Mammary epithelial cell (primary cell): ENCODE measurements at regions of chr2 and their contacts with region 1.

Region 1: DNA sequence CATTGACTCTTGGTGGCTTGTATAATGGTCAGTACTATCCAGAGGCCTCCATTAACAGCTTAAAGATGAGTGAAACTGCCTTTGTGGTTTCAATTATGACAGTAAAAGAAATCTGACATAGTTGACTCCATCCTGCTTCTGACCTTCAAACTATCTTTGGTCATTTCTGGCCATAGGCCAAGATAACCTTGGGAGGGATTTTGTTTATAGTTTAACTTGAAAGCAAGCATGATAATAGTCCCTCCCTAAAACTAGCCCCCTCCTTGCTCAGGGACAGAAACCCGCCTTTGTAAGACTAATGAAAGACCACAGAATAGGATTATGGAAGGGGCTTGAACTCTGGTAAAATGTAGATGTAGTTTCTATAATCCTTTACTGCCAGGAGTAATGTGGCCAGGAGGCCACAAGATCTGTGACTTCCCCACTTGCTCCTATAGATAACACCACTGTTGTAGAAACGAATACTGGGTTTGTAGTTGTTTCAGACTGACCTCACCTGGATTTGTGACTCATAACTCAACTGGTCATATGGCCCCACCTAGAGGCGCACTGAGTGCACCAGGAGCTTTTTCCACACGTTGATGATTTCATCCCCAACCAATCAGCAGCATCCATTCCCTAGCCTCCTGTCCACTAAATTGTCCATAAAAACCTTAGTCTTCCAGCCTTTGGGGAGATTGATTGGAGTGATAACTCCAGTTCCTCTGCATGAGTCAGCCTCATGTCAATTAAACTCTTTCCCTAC is 8.6 kb upstream of the PLEKHM3 start:
- DNase-seq: peak; percentile 90
- H3K4me3 ChIP-seq: no peak overlapping the region
- H3K27ac ChIP-seq: peak overlapping the region; percentile 4
- H3K4me1 ChIP-seq: no peaks in the 10 kb centered on the region
- H3K27me3 ChIP-seq: no peaks in the 10 kb centered on the region
- CTCF ChIP-seq: peak; percentile 68 to 76

Region 2: GRCh38 chr2:206800506-206801417 is 1233.2 kb before region 1 on chr2:
- CTCF ChIA-PET with region 1: no interaction called
- dilution Hi-C with region 1: no loop called
- in situ Hi-C with region 1: no loop called
- intact Hi-C with region 1: loop called (anchors 1 kb)
- DNase-seq: peak; percentile 69
- H3K4me3 ChIP-seq: no peak overlapping the region
- H3K27ac ChIP-seq: no peak overlapping the region
- H3K4me1 ChIP-seq: no peaks in the 10 kb centered on the region
- H3K27me3 ChIP-seq: no peaks in the 10 kb centered on the region
- CTCF ChIP-seq: peak; percentile 66 to 75

Region 3: DNA sequence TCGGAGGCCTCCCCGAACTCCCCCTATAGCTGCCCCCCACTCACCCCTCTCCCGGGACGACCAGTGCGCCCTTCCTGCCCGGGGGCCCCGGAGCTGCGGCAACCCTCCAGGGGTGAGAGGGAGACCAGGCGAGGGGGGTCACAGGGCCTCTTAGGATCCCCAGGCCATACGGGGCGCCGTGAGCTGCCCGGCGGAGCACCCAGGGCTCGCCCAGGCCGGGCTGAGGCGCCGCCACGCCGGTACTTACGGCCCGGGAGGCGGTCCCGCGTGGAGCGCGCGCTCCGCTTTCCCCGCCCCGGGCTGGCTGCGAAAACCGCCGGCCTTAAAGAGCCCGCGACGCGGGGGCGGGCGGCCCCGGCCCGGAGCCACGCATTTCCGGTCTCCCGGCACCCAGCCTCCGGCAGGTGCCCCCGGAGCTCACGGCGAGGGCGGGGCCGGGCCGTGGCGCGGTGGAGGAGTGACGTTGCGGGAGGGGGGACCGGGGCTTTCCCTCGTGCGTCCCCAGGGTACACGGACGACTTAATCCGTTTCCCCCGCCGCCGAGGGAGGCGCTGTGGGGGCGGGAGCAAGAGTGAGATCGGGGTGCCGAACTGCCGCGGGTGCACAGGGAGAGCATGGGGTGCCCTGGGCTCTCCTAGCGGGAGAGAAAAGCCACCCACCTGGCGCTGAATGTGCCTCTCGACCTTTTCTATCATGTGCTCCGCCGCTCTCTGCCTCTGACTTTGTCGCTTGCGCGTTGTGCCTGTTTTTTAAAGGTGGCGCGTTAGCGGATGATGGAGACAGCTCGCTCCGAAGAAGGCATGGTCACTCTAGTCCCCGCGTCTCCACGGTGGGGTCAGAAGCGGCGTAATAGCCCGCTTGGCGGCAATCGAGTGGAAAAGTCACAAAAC is 408.7 kb before region 1 on chr2 and contains the start of gene METTL21A:
- CTCF ChIA-PET with region 1: no interaction called
- dilution Hi-C with region 1: no loop called
- in situ Hi-C with region 1: no loop called
- intact Hi-C with region 1: loop called (anchors 5 kb)
- DNase-seq: peak; percentile 86
- H3K4me3 ChIP-seq: peak within 1 kb of the TSS; percentile 62 to 84 (median 65)
- H3K27ac ChIP-seq: peak within 1 kb of the TSS; percentile 65
- H3K4me1 ChIP-seq: peaks cover 15% of the 10 kb centered on the region
- H3K27me3 ChIP-seq: no peaks in the 10 kb centered on the region
- CTCF ChIP-seq: peak in 1 of 2 donors; percentile 56
- total RNA-seq, gene METTL21A: 8.7 to 9.0 TPM

Region 4: DNA sequence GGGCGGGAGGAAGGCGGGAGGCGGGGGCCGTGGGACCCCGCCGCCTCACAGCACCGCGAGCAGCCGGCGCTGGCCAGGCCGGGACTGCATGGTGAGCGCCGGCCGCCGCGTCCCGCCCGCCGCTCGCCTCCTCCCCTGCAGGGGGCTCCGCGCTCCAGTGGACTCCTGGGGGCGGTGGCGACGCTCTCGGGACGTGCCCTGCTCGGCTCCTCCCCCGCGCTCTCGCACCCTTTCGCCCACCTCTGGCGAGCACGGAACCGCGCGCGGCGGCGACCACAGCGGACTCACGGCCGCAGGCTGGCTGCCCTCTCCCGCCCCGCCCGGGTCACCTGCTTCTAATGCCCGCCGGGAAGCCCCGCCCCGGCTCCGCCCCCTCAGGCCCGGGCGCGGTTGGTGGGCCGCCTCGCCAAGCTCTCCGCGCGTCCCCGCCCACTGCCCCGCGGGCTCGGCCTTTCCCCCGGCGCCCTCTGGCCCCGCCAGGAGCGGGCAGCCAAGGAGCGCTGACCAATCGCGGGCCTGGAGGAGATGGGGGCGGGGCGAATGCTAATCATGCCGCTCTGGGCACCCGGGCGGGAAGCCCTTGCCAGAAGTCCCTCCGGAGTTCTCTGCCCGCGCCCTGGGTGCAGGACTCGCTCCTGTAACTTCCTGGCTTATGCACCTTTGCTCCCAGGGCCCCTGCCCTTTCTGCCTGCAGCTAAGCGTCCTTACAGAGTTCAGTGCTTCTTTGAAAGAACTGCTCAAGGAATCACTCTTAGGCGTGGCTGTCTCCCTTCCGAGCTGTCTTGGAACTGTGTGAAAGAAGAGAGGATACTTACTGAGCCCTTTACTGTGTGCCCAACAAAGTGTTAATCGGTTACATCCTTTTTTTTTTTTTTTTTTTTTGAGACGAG is 264.1 kb before region 1 on chr2 and contains the start of gene FZD5:
- CTCF ChIA-PET with region 1: no interaction called
- dilution Hi-C with region 1: no loop called
- in situ Hi-C with region 1: loop called in 1 of 2 experiments (anchors 10 kb)
- intact Hi-C with region 1: loop called (anchors 1 kb)
- DNase-seq: peak; percentile 91
- H3K4me3 ChIP-seq: peak within 1 kb of the TSS; percentile 67 to 76 (median 75)
- H3K27ac ChIP-seq: peak within 1 kb of the TSS; percentile 28
- H3K4me1 ChIP-seq: peaks cover 9% of the 10 kb centered on the region
- H3K27me3 ChIP-seq: no peaks in the 10 kb centered on the region
- CTCF ChIP-seq: peak; percentile 36 to 60
- total RNA-seq, gene FZD5: 4.4 to 8.7 TPM

Region 5: DNA sequence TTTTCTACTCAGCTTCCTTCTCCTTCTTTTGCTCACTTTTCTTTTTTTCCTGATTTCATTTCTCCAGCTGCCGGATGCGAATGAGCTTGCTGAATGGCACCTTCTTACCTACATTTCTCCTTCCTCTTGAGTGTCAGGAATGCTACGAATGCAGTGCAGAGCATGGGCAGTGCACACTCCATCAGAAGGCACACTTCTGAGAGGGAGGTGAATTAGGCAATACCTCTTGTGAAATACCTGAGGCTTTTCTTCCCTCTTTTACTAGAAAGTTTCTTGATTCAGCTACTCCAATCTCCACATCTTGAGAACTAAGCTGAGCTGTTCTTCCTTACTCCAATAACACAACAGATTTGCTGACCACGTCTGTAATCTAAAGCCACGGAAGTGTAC is 59.7 kb before region 1 on chr2:
- CTCF ChIA-PET with region 1: no interaction called
- dilution Hi-C with region 1: no loop called
- in situ Hi-C with region 1: no loop called
- intact Hi-C with region 1: loop called (anchors 1 kb)
- DNase-seq: peak; percentile 16
- H3K4me3 ChIP-seq: no peak overlapping the region
- H3K27ac ChIP-seq: no peak overlapping the region
- H3K4me1 ChIP-seq: no peaks in the 10 kb centered on the region
- H3K27me3 ChIP-seq: no peaks in the 10 kb centered on the region
- CTCF ChIP-seq: no peak

Region 6: GRCh38 chr2:208013285-208014178 is 20.4 kb before region 1 on chr2:
- CTCF ChIA-PET with region 1: no interaction called
- dilution Hi-C with region 1: no loop called
- in situ Hi-C with region 1: no loop called
- intact Hi-C with region 1: no loop called
- DNase-seq: peak; percentile 60
- H3K4me3 ChIP-seq: no peak overlapping the region
- H3K27ac ChIP-seq: no peak overlapping the region
- H3K4me1 ChIP-seq: peaks cover 11% of the 10 kb centered on the region
- H3K27me3 ChIP-seq: no peaks in the 10 kb centered on the region
- CTCF ChIP-seq: no peak